ENCODE measurements at regions of chr1 and their contacts with region 1.

Region 1: GRCh38 chr1:169794530-169795416 is at the start of gene METTL18:
- DNase-seq: peak; percentile 86 to 96 (median 91)
- ATAC-seq: peak; percentile 96
- H3K4me3 ChIP-seq: peak within 1 kb of the TSS; percentile 77 to 81
- H3K4me3 Mint-ChIP-seq: peak within 1 kb of the TSS; percentile 100
- H3K27ac ChIP-seq: peak within 1 kb of the TSS; percentile 78 to 95
- H3K27ac Mint-ChIP-seq: peak within 1 kb of the TSS; percentile 100
- H3K4me1 ChIP-seq: peaks cover 22% of the 10 kb centered on the region
- H3K4me1 Mint-ChIP-seq: peaks cover 48% of the 10 kb centered on the region
- H3K27me3 ChIP-seq: no peaks in the 10 kb centered on the region
- H3K27me3 Mint-ChIP-seq: no peaks in the 10 kb centered on the region
- CTCF ChIP-seq: peak; percentile 34
- total RNA-seq, gene METTL18: 2.2 to 3.7 TPM

Region 2: DNA sequence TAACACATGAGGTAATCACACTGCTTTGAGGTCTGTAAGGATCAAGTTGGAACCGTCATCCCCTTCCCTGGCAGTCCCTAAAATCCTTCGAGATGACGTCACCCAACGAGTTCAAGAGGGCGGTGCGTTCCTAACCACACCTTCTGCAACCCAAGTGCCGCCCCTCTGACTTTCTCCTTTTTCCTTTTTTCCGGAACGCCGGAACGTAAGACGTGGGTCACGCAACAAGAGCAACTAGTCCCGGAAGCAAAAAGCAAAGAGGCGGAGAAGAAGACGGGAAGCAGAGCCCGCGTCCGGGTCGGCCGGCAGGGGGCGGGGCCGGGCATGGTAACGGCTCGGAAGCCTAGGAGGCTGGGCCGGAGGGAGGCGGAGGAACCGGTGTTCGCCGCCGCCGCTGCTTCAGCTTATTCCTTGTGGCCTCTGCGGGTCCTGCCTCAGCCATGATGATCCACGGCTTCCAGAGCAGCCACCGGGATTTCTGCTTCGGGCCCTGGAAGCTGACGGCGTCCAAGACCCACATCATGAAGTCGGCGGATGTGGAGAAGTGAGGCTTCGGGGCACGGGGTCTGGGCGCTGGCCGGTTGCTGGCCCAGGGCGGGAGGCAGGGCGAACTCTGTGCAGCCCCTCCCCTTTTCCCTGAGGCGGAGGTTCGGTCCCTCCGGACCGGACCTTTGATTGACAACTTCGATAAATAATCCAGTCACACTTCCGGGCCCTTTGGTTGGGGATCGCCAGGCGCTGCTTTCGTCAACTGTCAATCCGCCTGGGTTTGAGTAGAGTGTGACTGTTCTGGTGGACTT is 1615.9 kb before region 1 on chr1 and contains the start of gene TIPRL:
- CTCF ChIA-PET with region 1: no interaction called
- POLR2A ChIA-PET with region 1: no interaction called
- intact Hi-C with region 1: loop called (anchors 1 to 5 kb)
- DNase-seq: peak; percentile 84 to 97 (median 93)
- ATAC-seq: peak; percentile 86
- H3K4me3 ChIP-seq: peak within 1 kb of the TSS; percentile 98 to 100
- H3K4me3 Mint-ChIP-seq: no peak within 1 kb of the TSS
- H3K27ac ChIP-seq: peak within 1 kb of the TSS; percentile 95 to 97
- H3K27ac Mint-ChIP-seq: no peak within 1 kb of the TSS
- H3K4me1 ChIP-seq: peaks cover 15% of the 10 kb centered on the region
- H3K4me1 Mint-ChIP-seq: peaks cover 12% of the 10 kb centered on the region
- H3K27me3 ChIP-seq: no peaks in the 10 kb centered on the region
- H3K27me3 Mint-ChIP-seq: peaks cover 7% of the 10 kb centered on the region
- CTCF ChIP-seq: peak; percentile 49
- total RNA-seq, gene TIPRL: 15.0 to 18.3 TPM

Region 3: DNA sequence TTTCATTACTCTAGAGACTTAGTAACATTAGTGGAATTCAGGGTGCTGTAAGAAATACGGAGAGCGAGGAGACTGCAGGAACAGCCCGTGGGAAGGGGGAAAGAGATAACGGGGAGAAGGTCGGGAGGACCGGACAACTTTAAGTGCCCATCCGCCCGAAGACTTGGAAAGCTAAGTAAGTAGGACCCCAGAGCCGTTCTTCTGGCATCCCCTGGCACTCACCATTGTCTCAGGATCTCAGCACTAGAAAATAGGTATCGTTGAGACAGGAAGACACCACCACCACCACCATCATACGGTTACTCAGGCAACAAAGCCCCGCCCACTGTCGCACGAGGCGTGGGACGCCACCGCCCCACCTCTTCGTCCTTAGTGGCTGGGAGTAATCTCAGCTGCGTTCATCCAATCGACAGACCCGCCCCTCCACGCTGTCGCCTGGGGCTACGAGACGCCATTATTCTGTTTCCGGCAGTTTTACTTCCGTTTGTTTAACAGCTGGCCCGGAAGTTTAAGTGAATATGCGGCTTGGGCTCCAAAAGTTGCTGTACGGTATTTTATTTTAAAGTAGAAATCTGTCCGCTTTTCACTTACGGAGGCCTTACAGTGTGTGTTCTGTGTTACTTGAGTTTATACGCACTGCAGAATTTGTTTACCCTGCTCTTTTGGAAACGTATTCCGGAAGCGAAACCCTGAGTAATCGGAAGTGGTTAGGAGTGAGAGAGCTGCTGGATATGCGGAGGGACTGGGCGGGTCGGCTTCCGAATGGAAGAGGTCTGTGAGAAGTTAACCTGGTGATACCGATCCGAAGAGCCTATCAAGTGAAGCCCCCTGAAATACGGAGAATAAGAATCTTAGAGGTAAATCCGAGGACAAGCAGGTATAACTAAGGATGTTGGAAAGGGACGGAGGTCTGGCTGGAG is 427.0 kb before region 1 on chr1 and contains the starts of genes BLZF1 and NME7:
- CTCF ChIA-PET with region 1: interaction called, 3 read pairs
- POLR2A ChIA-PET with region 1: no interaction called
- intact Hi-C with region 1: loop called (anchors 1 to 2 kb)
- DNase-seq: peak; percentile 96 to 99 (median 98)
- ATAC-seq: peak; percentile 93
- H3K4me3 ChIP-seq: peak within 1 kb of the TSS; percentile 84 to 94
- H3K4me3 Mint-ChIP-seq: peak within 1 kb of the TSS; percentile 51
- H3K27ac ChIP-seq: peak within 1 kb of the TSS; percentile 88 to 97
- H3K27ac Mint-ChIP-seq: peak within 1 kb of the TSS; percentile 32
- H3K4me1 ChIP-seq: peaks cover 23% of the 10 kb centered on the region
- H3K4me1 Mint-ChIP-seq: peaks cover 49% of the 10 kb centered on the region
- H3K27me3 ChIP-seq: no peaks in the 10 kb centered on the region
- H3K27me3 Mint-ChIP-seq: no peaks in the 10 kb centered on the region
- CTCF ChIP-seq: no peak
- total RNA-seq, gene BLZF1: 11.1 to 13.6 TPM
- total RNA-seq, gene NME7: 5.3 to 7.7 TPM

Region 4: DNA sequence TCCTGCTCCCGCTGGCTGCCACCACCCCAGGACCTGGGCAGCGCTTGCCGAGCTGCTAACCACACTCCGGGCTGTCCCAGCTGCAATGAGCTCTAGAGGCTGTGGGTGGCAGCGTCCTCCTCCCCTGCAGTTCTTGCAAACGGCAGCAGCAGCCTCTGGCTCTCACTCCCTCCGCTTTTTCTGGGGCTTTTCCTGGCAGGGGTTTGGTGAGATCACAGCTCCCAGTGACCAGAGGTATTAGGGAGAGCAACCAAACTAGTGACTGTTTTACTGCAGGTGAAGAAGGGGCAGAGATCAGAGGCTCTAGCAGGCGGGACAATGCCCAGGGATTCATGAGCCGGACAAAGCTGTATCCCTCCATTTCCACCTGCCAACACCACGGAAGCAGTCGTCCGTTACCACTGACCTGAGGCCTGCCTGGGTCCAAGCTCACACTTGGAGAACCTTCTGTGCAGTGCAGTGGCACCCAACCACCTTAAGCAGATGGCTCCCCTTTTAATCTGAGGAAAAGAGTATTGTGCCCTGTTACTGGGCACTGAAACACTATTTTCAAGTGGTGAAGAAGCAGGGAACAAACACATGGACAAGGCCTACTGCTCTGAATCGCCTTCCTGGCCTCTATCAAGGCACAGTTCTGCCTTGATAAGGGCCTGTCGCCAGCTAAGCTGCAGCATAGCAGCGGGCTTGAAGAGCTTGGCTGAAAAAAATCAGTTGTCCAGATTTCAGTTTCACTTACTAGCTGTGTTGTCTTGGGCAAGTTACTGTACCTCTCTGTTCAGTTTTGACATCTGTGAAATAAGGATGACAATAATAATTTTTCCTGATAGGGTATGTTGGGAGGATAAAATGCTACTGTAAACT is 208.1 kb before region 1 on chr1 and contains the start of gene F5:
- CTCF ChIA-PET with region 1: interaction called, 4 read pairs
- POLR2A ChIA-PET with region 1: interaction called, 4 read pairs
- intact Hi-C with region 1: loop called in 1 of 2 experiments (anchors 5 kb)
- DNase-seq: peak; percentile 53 to 83 (median 74)
- ATAC-seq: peak; percentile 100
- H3K4me3 ChIP-seq: peak within 1 kb of the TSS; percentile 1 to 32
- H3K4me3 Mint-ChIP-seq: peak within 1 kb of the TSS; percentile 76
- H3K27ac ChIP-seq: no peak within 1 kb of the TSS
- H3K27ac Mint-ChIP-seq: no peak within 1 kb of the TSS
- H3K4me1 ChIP-seq: peaks cover 21% of the 10 kb centered on the region
- H3K4me1 Mint-ChIP-seq: peaks cover 17% of the 10 kb centered on the region
- H3K27me3 ChIP-seq: no peaks in the 10 kb centered on the region
- H3K27me3 Mint-ChIP-seq: peaks cover 12% of the 10 kb centered on the region
- CTCF ChIP-seq: peak; percentile 70
- total RNA-seq, gene F5: 0.28 to 0.30 TPM

Region 5: GRCh38 chr1:170074250-170075157 is 279.7 kb after region 1 on chr1 and contains the start of gene KIFAP3:
- CTCF ChIA-PET with region 1: no interaction called
- POLR2A ChIA-PET with region 1: no interaction called
- intact Hi-C with region 1: loop called in 1 of 2 experiments (anchors 1 kb)
- DNase-seq: peak; percentile 89 to 99 (median 95)
- ATAC-seq: peak; percentile 96
- H3K4me3 ChIP-seq: peak within 1 kb of the TSS; percentile 74 to 92
- H3K4me3 Mint-ChIP-seq: peak within 1 kb of the TSS; percentile 89
- H3K27ac ChIP-seq: peak within 1 kb of the TSS; percentile 80 to 88
- H3K27ac Mint-ChIP-seq: peak within 1 kb of the TSS; percentile 94
- H3K4me1 ChIP-seq: peaks cover 28% of the 10 kb centered on the region
- H3K4me1 Mint-ChIP-seq: peaks cover 53% of the 10 kb centered on the region
- H3K27me3 ChIP-seq: no peaks in the 10 kb centered on the region
- H3K27me3 Mint-ChIP-seq: no peaks in the 10 kb centered on the region
- CTCF ChIP-seq: peak; percentile 46
- total RNA-seq, gene KIFAP3: 15.3 to 16.5 TPM

Region 6: GRCh38 chr1:171781176-171781875 is 1986.6 kb after region 1 on chr1 and contains the start of gene METTL13:
- CTCF ChIA-PET with region 1: no interaction called
- POLR2A ChIA-PET with region 1: no interaction called
- intact Hi-C with region 1: loop called in 1 of 2 experiments (anchors 5 kb)
- DNase-seq: peak; percentile 96 to 99 (median 98)
- ATAC-seq: peak; percentile 90
- H3K4me3 ChIP-seq: peak within 1 kb of the TSS; percentile 89 to 92
- H3K4me3 Mint-ChIP-seq: peak within 1 kb of the TSS; percentile 95
- H3K27ac ChIP-seq: peak within 1 kb of the TSS; percentile 75 to 89
- H3K27ac Mint-ChIP-seq: peak within 1 kb of the TSS; percentile 96
- H3K4me1 ChIP-seq: peaks cover 33% of the 10 kb centered on the region
- H3K4me1 Mint-ChIP-seq: peaks cover 54% of the 10 kb centered on the region
- H3K27me3 ChIP-seq: no peaks in the 10 kb centered on the region
- H3K27me3 Mint-ChIP-seq: no peaks in the 10 kb centered on the region
- CTCF ChIP-seq: no peak
- total RNA-seq, gene METTL13: 6.6 to 6.9 TPM

Measured in CD8-positive, alpha-beta T cell (primary cell).